ENCODE measurements at regions of chr12 and their contacts with region 1.

Region 1: GRCh38 chr12:87678453-87678852 is 350.7 kb downstream of the C12orf50 start:
- DNase-seq: no peak
- ATAC-seq: no peak
- H3K4me3 ChIP-seq: no peak overlapping the region
- H3K27ac ChIP-seq: no peak overlapping the region
- H3K4me1 ChIP-seq: no peaks in the 10 kb centered on the region
- H3K27me3 ChIP-seq: no peaks in the 10 kb centered on the region
- CTCF ChIP-seq: no peak
- POLR2A ChIP-seq: no peak

Region 2: GRCh38 chr12:86683568-86684304 is 994.7 kb before region 1 on chr12:
- intact Hi-C with region 1: loop called in 1 of 10 experiments (anchors 10 kb)
- DNase-seq: no peak
- ATAC-seq: no peak
- H3K4me3 ChIP-seq: no peak overlapping the region
- H3K27ac ChIP-seq: no peak overlapping the region
- H3K4me1 ChIP-seq: no peaks in the 10 kb centered on the region
- H3K27me3 ChIP-seq: no peaks in the 10 kb centered on the region
- CTCF ChIP-seq: no peak
- POLR2A ChIP-seq: no peak

Measured in heart left ventricle (tissue), 16 donors.